GM10248 (cell line): ENCODE measurements at regions of chr2 and their contacts with region 1.

Region 1: DNA sequence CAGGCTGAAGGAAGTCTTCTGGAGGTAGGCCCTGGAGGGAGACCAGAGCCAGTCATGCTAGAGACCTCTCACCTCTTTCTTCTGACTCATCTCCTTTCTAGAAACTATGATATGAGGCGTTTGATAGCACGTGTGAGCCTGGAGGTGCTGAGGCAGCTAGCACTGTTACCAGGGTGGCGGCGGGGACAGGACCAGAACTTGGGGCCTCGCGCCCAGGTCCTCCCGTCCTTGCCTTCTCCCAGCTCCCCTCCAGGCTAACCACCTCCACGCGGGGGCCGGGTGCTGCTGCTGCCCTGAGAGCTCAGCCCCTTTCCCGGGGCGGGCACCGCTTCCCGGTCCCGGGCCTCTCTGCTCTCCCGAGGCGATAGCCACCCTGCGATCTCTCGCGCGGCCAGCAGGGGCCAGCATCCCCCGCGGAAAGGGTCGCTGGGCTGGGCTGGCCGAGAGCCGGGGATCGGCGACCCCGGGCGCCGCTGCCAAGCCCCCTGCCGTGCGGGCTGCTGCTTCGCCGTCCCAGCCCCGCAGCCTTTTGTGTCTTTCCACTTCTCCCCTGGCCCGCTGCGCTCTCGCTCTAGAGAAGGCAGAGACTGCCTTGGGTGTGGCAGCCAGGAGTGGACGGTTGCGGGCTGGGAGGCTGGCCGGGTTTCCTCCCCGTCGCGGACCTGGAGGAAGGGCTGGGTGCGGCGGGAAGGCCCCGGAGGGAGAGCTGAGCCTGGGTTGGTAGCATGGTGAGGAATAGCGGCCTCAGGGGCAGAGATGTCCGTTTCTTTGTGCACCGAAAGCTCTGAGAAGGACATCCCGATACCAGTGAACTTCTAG is 49.1 kb downstream of the TMEM17 start:
- DNase-seq: peak; percentile 88
- CTCF ChIP-seq: peak; percentile 94

Region 2: GRCh38 chr2:62313449-62314227 is 143.3 kb before region 1 on chr2:
- CTCF ChIA-PET with region 1: no interaction called
- POLR2A ChIA-PET with region 1: no interaction called
- DNase-seq: peak; percentile 65
- CTCF ChIP-seq: no peak

Region 3: GRCh38 chr2:62334440-62335058 is 122.4 kb before region 1 on chr2:
- CTCF ChIA-PET with region 1: no interaction called
- POLR2A ChIA-PET with region 1: no interaction called
- DNase-seq: peak; percentile 40
- CTCF ChIP-seq: no peak

Region 4: DNA sequence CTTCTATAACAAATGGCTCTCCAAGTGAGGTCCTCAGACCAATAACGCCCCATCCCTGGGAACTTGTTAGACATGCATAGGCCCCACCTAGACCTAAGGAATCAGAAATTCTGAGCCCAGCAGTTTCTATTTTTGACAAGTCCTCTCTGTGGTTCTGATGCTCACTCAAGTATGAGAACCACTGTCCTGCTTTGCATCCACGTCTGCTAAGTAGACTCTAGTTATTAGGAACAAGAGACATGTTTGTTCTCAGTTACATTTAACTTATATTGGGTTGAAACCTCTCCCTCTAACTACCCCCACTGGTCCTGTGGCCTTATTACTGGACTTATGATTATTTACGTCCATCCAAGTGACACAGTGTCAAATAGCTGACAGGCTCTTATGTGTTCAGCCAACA is 21.2 kb before region 1 on chr2:
- CTCF ChIA-PET with region 1: interaction called, 10 read pairs
- POLR2A ChIA-PET with region 1: no interaction called
- DNase-seq: peak; percentile 60
- CTCF ChIP-seq: no peak

Region 5: GRCh38 chr2:62467475-62468321 is 10.8 kb after region 1 on chr2:
- CTCF ChIA-PET with region 1: interaction called, 80 read pairs
- POLR2A ChIA-PET with region 1: no interaction called
- DNase-seq: no peak
- CTCF ChIP-seq: no peak

Region 6: DNA sequence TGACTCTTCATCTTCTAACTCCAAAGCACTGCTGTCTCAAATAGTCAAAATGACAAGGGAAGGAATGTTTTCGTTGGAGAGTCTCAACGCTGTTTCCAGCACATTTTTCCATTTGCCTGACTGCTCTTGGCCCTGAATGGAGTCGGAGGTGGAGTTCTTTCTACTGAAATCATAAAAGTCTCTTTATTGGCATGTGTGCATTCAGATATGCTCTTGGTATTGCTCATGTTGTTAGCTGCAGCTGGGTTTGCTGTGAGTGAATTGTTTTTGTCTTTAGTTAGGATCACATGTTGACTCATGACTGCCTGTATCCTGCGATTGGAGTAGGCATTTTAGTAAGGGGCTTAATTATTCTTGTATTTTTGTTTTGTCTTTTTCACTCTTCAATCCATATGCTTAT is 32.2 kb after region 1 on chr2:
- CTCF ChIA-PET with region 1: interaction called, 15 read pairs
- POLR2A ChIA-PET with region 1: no interaction called
- DNase-seq: no peak
- CTCF ChIP-seq: no peak

Region 7: DNA sequence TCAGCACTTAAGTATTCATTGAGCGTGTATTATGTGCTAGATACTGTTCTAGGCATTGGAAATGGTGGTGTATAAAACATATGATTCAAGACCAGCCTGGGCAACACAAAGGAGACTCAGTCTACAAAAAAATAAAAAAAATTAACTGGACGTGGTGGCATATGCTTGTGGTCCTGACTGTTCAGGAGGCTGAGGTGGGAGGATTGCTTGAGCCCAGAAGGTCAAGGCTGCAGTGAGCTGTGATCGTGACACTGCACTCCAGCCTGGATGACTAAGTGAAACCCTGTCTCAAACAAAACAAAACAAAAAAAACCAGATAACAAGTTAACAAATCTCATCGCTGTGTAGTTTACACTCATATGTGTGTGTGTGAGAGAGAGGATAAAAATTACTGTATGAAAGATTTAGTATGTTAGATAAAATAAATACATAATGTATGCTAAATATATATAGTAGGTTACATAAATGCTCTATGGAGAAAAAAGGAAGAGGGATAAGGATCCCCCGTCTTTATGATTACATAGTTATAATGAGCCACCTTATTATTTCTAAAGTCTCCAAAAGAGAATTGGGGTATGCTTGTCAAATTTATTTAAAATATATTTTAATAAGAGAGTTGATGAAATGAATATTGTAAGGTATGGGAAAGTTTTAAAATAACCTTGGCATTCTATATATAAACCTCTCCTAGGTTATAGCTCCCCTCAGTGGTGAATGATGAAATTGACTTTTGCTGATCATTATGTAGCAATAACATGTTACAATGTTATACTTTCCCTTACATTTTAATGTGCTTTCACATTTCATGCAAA is 317.8 kb after region 1 on chr2:
- CTCF ChIA-PET with region 1: interaction called, 243 read pairs
- POLR2A ChIA-PET with region 1: no interaction called
- DNase-seq: peak; percentile 28
- CTCF ChIP-seq: peak; percentile 55